ENCODE measurements at regions of chr11 and their contacts with region 1.

Region 1: DNA sequence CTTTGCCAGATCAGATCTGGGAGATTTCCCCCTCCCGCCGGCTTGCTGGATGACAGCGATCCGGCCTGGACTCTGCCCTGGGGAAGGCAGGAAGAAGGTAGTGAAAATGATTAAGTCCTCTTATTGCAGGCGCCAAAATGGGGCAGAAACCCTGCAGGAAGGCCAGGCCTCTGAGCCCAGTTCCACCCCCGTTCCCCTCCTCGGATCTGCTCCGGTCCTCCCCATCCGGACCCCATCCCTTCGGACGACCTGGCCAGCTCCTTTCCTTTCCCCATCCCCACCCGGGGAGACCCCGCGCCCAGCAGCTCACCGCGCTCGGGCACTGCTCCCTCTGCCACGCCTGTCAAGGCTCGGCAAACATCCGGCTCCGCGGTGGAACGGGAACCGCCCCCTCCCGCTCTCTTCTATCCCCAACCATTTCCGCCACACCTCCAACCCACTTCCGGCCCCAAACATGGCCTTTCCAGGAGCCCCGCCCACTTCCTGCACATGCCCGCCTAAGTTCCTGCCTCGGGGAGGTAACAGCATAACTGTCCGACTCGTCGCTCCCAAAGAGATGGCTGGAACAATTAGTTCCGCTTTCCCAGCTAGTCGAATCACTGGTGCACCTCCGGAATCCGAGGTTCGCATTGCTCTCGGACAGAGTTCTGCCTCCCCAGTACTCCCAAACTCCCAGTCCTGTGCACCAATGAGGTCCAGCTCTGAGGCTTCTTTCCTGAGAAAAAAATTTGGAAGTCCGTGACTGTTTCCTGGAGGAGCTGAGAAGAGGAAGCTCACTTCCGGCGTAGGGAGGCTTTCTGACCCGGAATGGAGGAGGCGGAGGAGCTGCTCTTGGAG is at the starts of genes ARHGAP1 and ZNF408:
- DNase-seq: peak; percentile 97 to 100
- ATAC-seq: peak; percentile 97 to 99 (median 98)
- H3K4me3 ChIP-seq: peak within 1 kb of the TSS; percentile 85
- H3K4me3 Mint-ChIP-seq: peak within 1 kb of the TSS; percentile 97
- H3K27ac ChIP-seq: peak within 1 kb of the TSS; percentile 53
- H3K27ac Mint-ChIP-seq: peak within 1 kb of the TSS; percentile 84 to 94
- H3K4me1 ChIP-seq: peaks cover 44% of the 10 kb centered on the region
- H3K4me1 Mint-ChIP-seq: peaks cover 32 to 56% of the 10 kb centered on the region in 2 donors
- H3K27me3 ChIP-seq: no peaks in the 10 kb centered on the region
- H3K27me3 Mint-ChIP-seq: no peaks in the 10 kb centered on the region
- CTCF ChIP-seq: no peak
- total RNA-seq, gene ARHGAP1: 89.8 to 111 (median 102) TPM
- total RNA-seq, gene ZNF408: 9.1 to 19.0 (median 9.6) TPM

Region 2: DNA sequence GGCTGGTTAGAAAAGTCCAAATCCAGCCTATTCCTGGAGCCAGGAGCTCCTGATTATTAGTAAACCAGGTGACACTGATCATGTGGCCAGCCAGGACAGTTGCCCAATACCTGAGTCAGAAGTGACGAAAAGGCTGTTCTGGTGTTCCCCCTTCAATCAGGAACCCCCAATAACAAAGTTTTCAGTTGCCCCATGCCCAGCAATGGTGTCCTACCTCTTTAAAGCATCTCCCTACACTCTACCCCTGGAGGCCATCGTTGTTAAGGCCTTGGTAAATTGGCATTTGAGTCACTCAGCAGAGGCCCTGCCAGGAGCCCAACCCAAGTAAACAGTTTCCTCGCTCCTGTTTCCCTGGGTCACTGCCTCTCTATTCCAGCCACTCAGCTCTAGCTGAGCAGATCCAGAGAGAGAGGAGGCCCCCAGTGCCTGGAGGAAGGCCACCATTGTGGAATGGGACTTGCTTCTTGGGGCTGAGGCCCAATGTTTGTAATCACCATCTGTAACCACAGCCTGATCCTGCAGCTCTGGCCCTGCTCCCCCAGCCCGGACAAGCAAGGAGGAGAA is 25.1 kb before region 1 on chr11:
- intact Hi-C with region 1: loop called (anchors 1 kb)
- DNase-seq: no peak
- ATAC-seq: no peak
- H3K4me3 ChIP-seq: no peak overlapping the region
- H3K4me3 Mint-ChIP-seq: peak overlapping the region; percentile 4
- H3K27ac ChIP-seq: peak overlapping the region; percentile 71
- H3K27ac Mint-ChIP-seq: peak overlapping the region; percentile 90 to 94
- H3K4me1 ChIP-seq: peaks cover 70% of the 10 kb centered on the region
- H3K4me1 Mint-ChIP-seq: peaks cover 44 to 52% of the 10 kb centered on the region in 2 donors
- H3K27me3 ChIP-seq: no peaks in the 10 kb centered on the region
- H3K27me3 Mint-ChIP-seq: no peaks in the 10 kb centered on the region
- CTCF ChIP-seq: no peak